HCT116 (cell line): ENCODE measurements at regions of chr18 and their contacts with region 1.

Region 1: GRCh38 chr18:50218432-50219197 is 23.7 kb upstream of the MYO5B start:
- DNase-seq: peak; percentile 33
- ATAC-seq: peak; percentile 97
- H3K4me3 ChIP-seq: no peak overlapping the region
- H3K27ac ChIP-seq: no peak overlapping the region
- H3K4me1 ChIP-seq: no peaks in the 10 kb centered on the region
- H3K27me3 ChIP-seq: no peaks in the 10 kb centered on the region
- CTCF ChIP-seq: peak; percentile 55 to 67 (median 66)
- POLR2A ChIP-seq: no peak
- RAD21 ChIP-seq: peak; percentile 68

Region 2: DNA sequence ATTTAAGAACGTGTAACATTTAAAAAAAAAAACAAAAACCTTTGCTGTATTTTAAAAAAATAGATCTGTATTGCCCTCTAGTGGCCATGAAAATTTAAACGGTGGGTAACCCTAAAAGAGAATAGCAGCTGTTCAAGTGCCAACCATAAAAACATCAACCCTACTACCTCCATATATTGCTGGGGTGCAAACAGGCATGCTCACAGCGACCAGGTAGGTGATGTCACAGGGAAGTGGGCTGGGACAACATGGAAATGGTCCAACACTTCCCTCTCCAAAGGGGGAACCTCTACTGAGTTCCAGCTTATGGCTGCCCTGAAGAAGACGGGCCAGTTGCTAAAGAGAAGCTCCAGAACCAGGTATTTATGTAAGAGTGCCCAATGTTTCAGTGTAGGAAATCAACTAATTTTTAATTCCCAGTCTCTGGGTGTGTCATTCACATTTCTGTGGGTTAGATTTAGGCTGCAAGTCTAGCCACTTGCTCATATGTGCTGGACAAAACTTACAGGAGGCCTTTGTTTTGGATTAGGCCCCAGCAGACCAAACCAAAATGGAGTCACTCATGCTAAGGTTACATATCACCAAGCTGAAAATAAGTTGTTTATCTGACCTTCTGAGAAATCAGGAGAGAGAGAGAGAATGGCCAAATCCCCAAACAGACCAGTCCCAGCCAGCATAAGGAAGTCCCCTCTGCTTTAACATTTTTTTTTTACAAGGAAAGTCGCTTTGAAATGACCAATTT is 210.8 kb after region 1 on chr18:
- CTCF ChIA-PET with region 1: interaction called, 21 read pairs
- POLR2A ChIA-PET with region 1: no interaction called
- RAD21 ChIA-PET with region 1: no interaction called
- intact Hi-C with region 1: loop called (anchors 1 kb)
- DNase-seq: peak; percentile 39
- ATAC-seq: peak; percentile 72
- H3K4me3 ChIP-seq: no peak overlapping the region
- H3K27ac ChIP-seq: no peak overlapping the region
- H3K4me1 ChIP-seq: no peaks in the 10 kb centered on the region
- H3K27me3 ChIP-seq: no peaks in the 10 kb centered on the region
- CTCF ChIP-seq: peak; percentile 32 to 49 (median 37); a peak in 4 of 6 replicates
- POLR2A ChIP-seq: no peak
- RAD21 ChIP-seq: peak; percentile 45; the same call in 1 of the 2 replicates

Region 3: GRCh38 chr18:50602525-50602924 is 383.9 kb after region 1 on chr18:
- CTCF ChIA-PET with region 1: no interaction called
- POLR2A ChIA-PET with region 1: no interaction called
- RAD21 ChIA-PET with region 1: no interaction called
- intact Hi-C with region 1: no loop called
- DNase-seq: no peak
- ATAC-seq: no peak
- H3K4me3 ChIP-seq: no peak overlapping the region
- H3K27ac ChIP-seq: no peak overlapping the region
- H3K4me1 ChIP-seq: no peaks in the 10 kb centered on the region
- H3K27me3 ChIP-seq: peaks cover 15% of the 10 kb centered on the region; the same call in 1 of the 2 replicates
- CTCF ChIP-seq: no peak
- POLR2A ChIP-seq: no peak
- RAD21 ChIP-seq: no peak